Right ventricle myocardium inferior (tissue), 1 donor: ENCODE measurements at regions of chr18 and their contacts with region 1.

Region 1: GRCh38 chr18:60722746-60723145 is 350.2 kb upstream of the MC4R start:
- DNase-seq: no peak
- ATAC-seq: no peak

Region 2: DNA sequence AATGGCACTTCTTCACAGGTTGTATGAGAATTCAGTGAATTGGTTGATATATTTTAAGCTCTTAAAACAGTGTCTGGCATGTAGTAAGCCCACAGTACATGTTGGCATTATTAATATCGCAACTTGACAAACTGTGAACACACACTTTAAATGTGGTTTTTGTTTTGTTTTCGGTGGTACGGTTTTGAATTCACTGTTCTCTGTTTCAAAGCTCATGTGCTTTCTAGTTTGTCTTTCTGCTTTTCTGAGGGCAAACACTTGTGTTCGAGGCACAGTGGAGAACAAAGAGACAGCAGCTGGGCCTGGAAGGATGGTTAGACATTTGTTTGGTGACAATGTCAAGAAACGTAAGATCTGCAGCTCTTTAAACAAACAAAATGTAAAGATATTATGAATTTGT is 73.6 kb before region 1 on chr18:
- intact Hi-C with region 1: no loop called
- DNase-seq: no peak
- ATAC-seq: no peak

Region 3: GRCh38 chr18:60784161-60784560 is 61.4 kb after region 1 on chr18:
- intact Hi-C with region 1: loop called (anchors 10 kb)
- DNase-seq: no peak
- ATAC-seq: no peak

Region 4: GRCh38 chr18:60873708-60874107 is 151.0 kb after region 1 on chr18:
- intact Hi-C with region 1: no loop called
- DNase-seq: no peak
- ATAC-seq: no peak